ENCODE measurements at regions of chr12 and their contacts with region 1.

Region 1: GRCh38 chr12:12194206-12194605 is 72.6 kb downstream of the LRP6 start:
- DNase-seq: peak in 1 of 2 experiments; percentile 65
- H3K4me3 ChIP-seq: no peak overlapping the region
- H3K27ac ChIP-seq: no peak overlapping the region
- H3K4me1 ChIP-seq: 0 out of 2 replicates have a peak, but pooled peaks cover 7% of the 10 kb centered on the region
- H3K27me3 ChIP-seq: no peaks in the 10 kb centered on the region
- CTCF ChIP-seq: no peak

Region 2: DNA sequence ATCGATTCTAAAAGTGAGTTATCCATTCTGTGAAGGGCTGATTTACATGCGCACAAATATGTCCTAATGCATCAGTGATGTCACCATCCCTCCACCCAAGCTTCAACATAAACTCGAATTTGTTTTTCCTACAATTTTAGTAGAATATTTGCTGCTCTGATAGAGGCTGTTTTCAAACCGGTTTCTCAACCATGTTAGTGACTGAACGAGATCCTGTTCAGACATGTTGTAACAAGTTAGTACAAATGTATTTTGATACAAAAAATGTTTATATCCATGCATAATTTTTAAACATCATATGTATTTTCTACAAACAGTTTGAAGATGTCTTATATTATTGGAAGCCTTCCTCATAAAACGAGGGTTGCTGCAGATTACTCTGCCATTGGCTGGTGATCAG is 786.1 kb before region 1 on chr12:
- CTCF ChIA-PET with region 1: interaction called, 10 read pairs
- POLR2A ChIA-PET with region 1: no interaction called
- intact Hi-C with region 1: no loop called
- DNase-seq: no peak
- H3K4me3 ChIP-seq: no peak overlapping the region
- H3K27ac ChIP-seq: no peak overlapping the region
- H3K4me1 ChIP-seq: no peaks in the 10 kb centered on the region
- H3K27me3 ChIP-seq: peaks cover 15% of the 10 kb centered on the region
- CTCF ChIP-seq: no peak

Region 3: DNA sequence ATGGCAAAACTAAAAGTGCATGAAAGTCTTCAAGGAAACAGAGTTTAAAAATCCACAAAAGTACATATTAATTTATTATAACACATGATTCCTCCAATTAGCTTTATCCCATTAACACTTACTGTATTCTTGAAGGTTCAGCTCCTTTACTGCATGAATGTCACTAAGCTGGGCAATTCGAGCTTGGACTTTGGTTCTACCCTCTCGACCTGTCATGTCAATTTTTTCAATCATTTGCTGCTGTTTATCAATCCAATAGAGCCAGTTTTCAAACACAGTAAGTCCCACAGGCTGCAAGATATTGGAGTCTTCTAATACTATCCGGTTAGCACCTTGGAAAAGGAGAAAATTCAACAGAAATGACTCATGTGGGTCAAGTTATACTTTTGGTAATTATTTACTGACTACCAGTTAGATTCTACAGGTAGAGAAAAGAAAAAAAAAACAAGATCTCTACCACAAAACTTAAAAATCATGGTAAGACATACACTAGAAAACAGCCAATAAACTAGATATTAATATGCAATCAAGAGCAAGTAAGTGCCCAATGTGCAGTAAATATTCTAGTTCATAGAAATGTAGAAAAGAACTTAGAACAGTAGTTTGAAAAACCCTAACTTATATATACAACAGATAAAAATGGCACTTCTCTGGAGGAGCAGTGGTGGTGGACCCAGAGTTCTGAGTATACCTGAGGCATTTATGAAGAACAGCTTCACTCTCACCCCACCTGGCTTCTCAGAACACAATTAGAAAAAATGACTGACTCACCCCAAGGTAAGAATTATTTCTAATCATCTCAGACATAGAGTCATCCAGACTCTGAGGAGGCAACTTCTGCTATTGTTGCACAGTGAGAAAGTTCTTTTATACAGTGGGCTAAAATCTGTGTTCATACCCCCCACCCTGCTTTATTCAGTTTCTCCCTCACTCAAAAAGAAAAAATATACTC is 55.7 kb before region 1 on chr12:
- CTCF ChIA-PET with region 1: no interaction called
- POLR2A ChIA-PET with region 1: no interaction called
- intact Hi-C with region 1: no loop called
- DNase-seq: no peak
- H3K4me3 ChIP-seq: no peak overlapping the region
- H3K27ac ChIP-seq: no peak overlapping the region
- H3K4me1 ChIP-seq: no peaks in the 10 kb centered on the region
- H3K27me3 ChIP-seq: no peaks in the 10 kb centered on the region
- CTCF ChIP-seq: no peak

Measured in PC-9 (cell line).